ENCODE measurements at regions of chr12 and their contacts with region 1.

Region 1: GRCh38 chr12:106774005-106774807 is at the start of gene RIC8B:
- DNase-seq: peak; percentile 92 to 99 (median 98)

Region 2: DNA sequence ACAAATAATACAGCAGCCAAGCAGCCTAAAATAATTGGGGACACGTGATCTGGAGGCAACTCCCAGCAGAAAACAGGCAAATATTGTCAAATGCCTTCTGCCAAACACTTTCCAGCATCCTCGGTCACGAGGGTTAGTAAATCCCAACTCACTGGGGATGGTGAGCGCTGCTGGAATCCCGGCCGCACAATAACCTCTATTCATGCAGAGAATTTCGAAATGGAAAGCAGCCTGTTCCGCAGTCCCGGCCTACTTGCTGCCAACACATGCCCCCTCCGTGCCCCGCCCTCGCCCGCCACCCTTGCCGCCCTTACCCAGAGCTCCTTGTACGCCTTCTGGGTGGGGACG is 129.2 kb before region 1 on chr12:
- intact Hi-C with region 1: loop called (anchors 5 kb)
- DNase-seq: peak; percentile 74 to 97 (median 91)

Measured in head of caudate nucleus (tissue), 42 donors.